OCI-LY7 (cell line): ENCODE measurements at regions of chr4 and their contacts with region 1.

Region 1: GRCh38 chr4:41164405-41164804 is 49.9 kb downstream of the APBB2 start:
- DNase-seq: no peak
- H3K4me3 ChIP-seq: no peak overlapping the region
- H3K27ac ChIP-seq: no peak overlapping the region
- H3K4me1 ChIP-seq: peaks cover 3% of the 10 kb centered on the region
- CTCF ChIP-seq: no peak

Region 2: DNA sequence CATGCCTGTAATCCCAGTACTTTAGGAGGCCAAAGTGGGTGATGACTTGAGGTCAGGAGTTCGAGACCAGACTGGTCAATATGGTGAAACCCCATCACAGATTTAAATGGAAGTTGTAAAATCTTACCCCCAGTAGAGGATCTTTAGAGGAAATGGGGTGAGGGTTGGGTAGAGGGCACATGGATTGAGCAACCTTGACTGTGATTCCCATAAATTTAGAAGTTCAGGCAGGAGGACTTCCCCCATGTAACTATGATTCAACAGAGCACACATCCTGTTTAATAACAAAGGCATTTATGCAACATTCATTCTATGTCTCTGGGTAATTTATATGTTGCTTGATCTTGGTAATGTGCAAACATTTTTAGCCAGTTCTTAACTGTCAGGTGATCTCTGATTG is 677.9 kb before region 1 on chr4:
- CTCF ChIA-PET with region 1: no interaction called
- POLR2A ChIA-PET with region 1: no interaction called
- intact Hi-C with region 1: no loop called
- DNase-seq: no peak
- H3K4me3 ChIP-seq: no peak overlapping the region
- H3K27ac ChIP-seq: no peak overlapping the region
- H3K4me1 ChIP-seq: peaks cover 4% of the 10 kb centered on the region
- CTCF ChIP-seq: no peak

Region 3: DNA sequence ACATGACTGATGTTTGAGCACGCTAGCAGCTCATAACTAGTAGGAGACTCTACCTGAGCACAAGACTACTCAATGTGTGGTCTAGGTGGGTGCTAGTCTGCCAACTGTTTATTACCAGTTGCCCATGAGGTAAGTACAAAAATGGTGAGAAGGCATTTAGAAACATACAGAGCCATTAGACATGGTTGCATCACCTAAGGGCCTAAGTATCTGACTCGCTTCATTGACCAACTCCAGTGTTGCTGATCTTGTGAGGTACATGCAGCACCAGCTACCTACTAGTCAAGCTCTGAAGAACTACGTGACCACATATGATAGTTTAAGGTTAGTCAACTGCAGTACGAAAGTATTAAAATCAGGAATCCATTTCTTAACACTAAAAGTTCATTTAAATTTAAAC is 10.0 kb after region 1 on chr4:
- CTCF ChIA-PET with region 1: no interaction called
- POLR2A ChIA-PET with region 1: interaction called, 11 read pairs
- intact Hi-C with region 1: no loop called
- DNase-seq: peak; percentile 12
- H3K4me3 ChIP-seq: no peak overlapping the region
- H3K27ac ChIP-seq: no peak overlapping the region
- H3K4me1 ChIP-seq: peaks cover 54% of the 10 kb centered on the region
- CTCF ChIP-seq: no peak